Activated CD8-positive, alpha-beta T cell treated with anti-CD3 and anti-CD28 coated beads for 36 hours (primary cell): ENCODE measurements at regions of chr17 and their contacts with region 1.

Region 1: GRCh38 chr17:49031965-49032928 is 35.1 kb downstream of the IGF2BP1 start:
- DNase-seq: peak; percentile 60
- ATAC-seq: peak; percentile 91
- H3K4me3 Mint-ChIP-seq: no peak overlapping the region
- H3K27ac Mint-ChIP-seq: no peak overlapping the region
- H3K4me1 Mint-ChIP-seq: no peaks in the 10 kb centered on the region
- H3K27me3 Mint-ChIP-seq: no peaks in the 10 kb centered on the region
- CTCF ChIP-seq: peak; percentile 79

Region 2: DNA sequence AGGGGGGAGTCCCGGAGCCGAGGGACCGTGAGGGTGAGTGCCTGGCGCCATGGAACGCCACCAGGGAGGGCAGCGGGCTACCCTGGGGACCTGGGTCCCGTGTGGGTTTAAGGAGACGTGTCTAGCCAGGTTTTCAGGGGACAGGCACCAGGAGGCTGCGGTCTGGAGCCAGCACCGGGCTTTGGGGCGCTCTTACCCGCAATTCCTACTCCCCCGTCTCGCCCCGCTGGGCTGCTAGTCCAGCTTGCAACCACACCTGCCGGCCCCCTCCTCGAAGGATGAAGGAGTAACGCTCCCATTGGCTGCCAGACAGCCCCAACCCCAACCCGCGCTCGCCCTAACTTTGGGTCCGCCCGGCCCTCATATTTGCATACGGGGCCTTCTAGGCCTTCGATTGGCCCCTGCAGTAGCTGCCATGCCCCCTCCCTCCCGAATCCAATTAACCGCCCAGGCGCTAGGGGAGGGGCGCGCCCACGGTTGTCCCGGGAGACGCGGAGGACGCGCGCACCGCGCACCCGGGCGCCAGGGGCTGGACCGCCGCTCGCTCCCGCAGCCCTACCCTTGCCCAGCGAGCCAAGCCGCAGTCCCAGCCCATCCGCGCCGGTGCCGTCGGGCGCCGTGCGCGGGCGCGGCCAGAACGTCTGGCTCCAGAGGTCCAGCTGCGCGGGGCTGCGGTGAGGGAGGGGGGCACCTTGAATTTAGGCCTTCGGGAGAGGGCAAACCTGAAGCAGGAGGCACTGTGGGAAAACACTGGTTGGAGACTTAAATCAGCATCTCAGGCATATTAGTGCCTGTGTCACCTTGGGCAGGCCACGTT is 215.3 kb before region 1 on chr17 and contains the start of gene TTLL6:
- CTCF ChIA-PET with region 1: interaction called, 12 read pairs
- POLR2A ChIA-PET with region 1: no interaction called
- intact Hi-C with region 1: no loop called
- DNase-seq: peak; percentile 76
- ATAC-seq: peak; percentile 94
- H3K4me3 Mint-ChIP-seq: peak within 1 kb of the TSS; percentile 63
- H3K27ac Mint-ChIP-seq: no peak within 1 kb of the TSS
- H3K4me1 Mint-ChIP-seq: peaks cover 18% of the 10 kb centered on the region
- H3K27me3 Mint-ChIP-seq: peaks cover 46% of the 10 kb centered on the region
- CTCF ChIP-seq: no peak
- total RNA-seq, gene TTLL6: not detected

Region 3: DNA sequence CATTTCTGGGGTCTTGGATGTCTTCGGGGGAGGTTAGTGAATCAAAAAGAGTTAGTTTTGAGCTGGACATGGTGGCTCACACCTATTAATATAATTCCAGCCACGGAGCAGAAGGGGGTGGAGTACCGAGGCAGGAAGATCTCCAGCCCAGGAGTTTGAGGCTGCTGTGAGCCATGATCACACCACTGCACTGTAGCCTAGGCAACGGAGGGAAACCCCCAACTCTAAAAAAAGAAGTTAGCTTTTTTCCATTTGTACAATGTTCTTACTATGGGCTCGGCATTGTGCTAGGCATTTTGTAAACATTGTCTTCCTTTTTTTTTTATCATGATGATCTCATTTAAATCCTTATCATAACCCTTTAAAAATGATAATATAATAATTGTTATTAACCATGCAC is 79.3 kb before region 1 on chr17:
- CTCF ChIA-PET with region 1: interaction called, 14 read pairs
- POLR2A ChIA-PET with region 1: no interaction called
- intact Hi-C with region 1: no loop called
- DNase-seq: peak; percentile 47
- ATAC-seq: peak; percentile 51
- H3K4me3 Mint-ChIP-seq: no peak overlapping the region
- H3K27ac Mint-ChIP-seq: no peak overlapping the region
- H3K4me1 Mint-ChIP-seq: peaks cover 3% of the 10 kb centered on the region
- H3K27me3 Mint-ChIP-seq: peaks cover 9% of the 10 kb centered on the region
- CTCF ChIP-seq: no peak

Region 4: DNA sequence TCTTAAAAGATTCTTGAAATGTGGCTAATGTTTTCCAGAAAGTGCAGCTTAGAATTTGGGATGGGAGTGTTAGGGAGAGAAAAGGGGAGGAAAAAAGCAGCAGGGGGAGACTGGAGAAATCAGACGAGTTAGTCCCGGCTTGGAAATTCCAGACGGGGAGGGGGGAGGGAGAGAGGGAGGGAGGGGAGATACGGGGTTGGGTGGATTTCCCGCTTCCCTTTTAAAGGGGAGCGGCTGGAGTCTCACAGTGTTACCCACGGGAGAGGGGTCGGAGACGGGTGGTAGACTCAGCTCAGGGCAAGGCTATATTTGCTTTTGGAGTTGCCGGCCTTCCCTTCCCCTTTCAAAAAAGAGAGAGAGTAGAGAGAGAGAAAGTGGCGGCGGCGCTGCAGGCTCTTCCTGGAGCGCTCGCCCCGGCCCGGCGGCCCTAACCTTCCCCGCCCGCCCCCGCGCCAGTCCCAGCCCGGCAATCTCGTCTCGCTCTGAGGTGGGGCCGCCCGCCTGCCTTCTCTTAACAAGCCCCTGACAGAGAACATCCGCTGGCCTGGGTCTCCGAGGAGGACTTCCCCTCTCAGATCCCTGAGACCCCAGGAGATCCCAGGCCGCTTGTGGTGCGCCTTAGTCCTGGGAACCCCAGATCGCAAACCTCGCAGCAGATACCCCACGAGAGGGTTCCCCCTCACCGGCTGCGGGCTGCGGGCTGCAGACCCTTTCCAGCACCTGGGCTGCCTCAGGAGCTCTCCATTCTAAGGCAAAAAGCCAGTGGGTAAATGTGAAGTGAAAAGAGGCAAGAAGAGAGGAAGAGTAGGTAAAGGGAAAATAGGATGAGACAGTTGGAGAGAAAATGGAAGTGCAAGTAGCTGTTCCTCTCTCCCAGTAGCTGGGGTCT is 28.4 kb before region 1 on chr17:
- CTCF ChIA-PET with region 1: interaction called, 16 read pairs
- POLR2A ChIA-PET with region 1: no interaction called
- intact Hi-C with region 1: no loop called
- DNase-seq: peak; percentile 31
- ATAC-seq: peak; percentile 39
- H3K4me3 Mint-ChIP-seq: no peak overlapping the region
- H3K27ac Mint-ChIP-seq: no peak overlapping the region
- H3K4me1 Mint-ChIP-seq: peaks cover under 1% of the 10 kb centered on the region
- H3K27me3 Mint-ChIP-seq: peaks cover 72% of the 10 kb centered on the region
- CTCF ChIP-seq: no peak

Region 5: GRCh38 chr17:49045376-49045775 is 13.1 kb after region 1 on chr17:
- CTCF ChIA-PET with region 1: interaction called, 19 read pairs
- POLR2A ChIA-PET with region 1: no interaction called
- intact Hi-C with region 1: no loop called
- DNase-seq: no peak
- ATAC-seq: no peak
- H3K4me3 Mint-ChIP-seq: no peak overlapping the region
- H3K27ac Mint-ChIP-seq: no peak overlapping the region
- H3K4me1 Mint-ChIP-seq: no peaks in the 10 kb centered on the region
- H3K27me3 Mint-ChIP-seq: no peaks in the 10 kb centered on the region
- CTCF ChIP-seq: no peak

Region 6: DNA sequence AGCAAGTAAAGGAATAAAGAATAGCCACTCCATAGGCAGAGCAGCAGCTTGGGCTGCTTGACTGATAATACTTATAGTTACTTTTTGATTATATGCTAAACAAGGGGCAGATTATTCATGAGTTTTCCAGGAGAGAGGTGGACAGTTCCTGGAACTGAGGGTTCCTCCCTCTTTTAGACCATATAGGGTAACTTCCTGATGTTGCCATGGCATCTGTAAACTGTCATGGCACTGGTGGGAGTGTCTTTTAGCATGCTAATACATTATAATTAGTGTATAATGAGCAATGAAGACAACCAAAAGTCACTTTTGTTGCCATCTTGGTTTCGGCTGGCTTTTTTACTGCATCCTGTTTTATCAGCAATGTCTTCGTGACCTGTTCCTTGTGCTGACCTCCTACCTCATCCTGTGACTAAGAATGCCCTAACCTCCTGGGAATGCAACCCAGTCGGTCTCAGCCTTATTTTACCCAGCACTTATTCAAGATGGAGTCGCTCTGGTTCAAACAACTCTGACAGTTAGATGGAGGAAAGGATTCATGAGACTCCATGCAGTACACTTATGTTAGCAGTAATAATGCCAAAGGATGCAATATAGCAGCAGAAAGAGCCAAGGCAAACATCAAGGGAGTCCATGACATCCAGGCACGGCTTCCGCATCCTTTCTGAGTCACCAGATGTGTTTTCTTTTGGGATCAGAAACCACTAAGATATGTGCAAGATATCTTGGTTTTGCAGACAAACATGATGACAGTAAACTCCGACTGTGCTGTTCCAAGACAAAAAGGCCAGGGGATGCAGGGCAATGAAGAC is 44.5 kb after region 1 on chr17:
- CTCF ChIA-PET with region 1: no interaction called
- POLR2A ChIA-PET with region 1: no interaction called
- intact Hi-C with region 1: no loop called
- DNase-seq: no peak
- ATAC-seq: no peak
- H3K4me3 Mint-ChIP-seq: no peak overlapping the region
- H3K27ac Mint-ChIP-seq: no peak overlapping the region
- H3K4me1 Mint-ChIP-seq: no peaks in the 10 kb centered on the region
- H3K27me3 Mint-ChIP-seq: peaks cover 13% of the 10 kb centered on the region
- CTCF ChIP-seq: no peak